ENCODE measurements at regions of chr6 and their contacts with region 1.

Region 1: DNA sequence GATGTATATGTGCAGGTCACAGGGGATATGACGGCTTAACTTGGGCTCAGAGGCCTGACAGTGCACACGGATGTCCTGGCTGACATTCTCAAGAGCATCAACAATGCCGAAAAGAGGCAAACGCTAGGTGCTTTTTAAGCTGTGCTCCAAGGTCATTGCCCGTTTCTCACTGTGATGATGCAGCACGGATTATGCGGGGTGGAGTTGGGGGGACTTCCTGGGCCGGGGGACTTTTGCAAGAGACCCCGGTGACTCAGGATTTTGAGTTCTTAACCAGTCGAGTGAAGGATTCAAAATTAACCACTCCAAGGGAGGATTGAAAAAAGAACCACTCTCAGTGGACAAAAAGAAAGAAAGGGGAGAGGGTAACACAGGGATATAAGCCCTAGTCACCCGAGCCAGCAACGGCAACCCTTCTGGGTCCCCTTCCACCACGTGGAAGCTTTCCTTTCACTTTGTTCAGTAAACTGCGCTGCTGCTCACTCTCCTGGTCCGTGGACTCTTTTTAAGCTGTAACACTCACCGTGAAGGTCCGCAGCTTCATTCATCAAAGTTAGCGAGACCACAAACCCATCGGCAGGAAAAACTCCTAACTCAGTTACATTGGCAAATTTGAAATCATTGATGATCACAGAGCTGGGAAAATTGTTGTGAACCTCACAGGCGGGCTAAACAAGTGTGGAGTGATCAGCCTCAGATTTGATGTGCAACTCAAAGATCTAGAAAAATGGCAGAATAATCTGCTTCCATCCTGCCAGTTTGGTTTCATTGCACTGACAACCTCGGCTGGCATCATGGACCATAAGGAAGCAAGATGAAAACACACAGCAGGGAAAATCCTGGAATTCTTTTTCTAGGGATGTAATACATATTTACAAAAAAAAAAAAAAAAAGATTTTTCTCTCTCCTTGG is 199.3 kb downstream of the ARID1B start:
- DNase-seq: peak; percentile 48
- H3K4me3 Mint-ChIP-seq: peak overlapping the region; percentile 73
- H3K27ac Mint-ChIP-seq: peak overlapping the region; percentile 77
- H3K4me1 Mint-ChIP-seq: peaks cover 74% of the 10 kb centered on the region
- H3K27me3 Mint-ChIP-seq: no peaks in the 10 kb centered on the region

Region 2: GRCh38 chr6:156963712-156964700 is 12.5 kb before region 1 on chr6:
- CTCF ChIA-PET with region 1: interaction called, 3 read pairs
- POLR2A ChIA-PET with region 1: no interaction called
- intact Hi-C with region 1: loop called (anchors 1 kb)
- DNase-seq: peak; percentile 79
- H3K4me3 Mint-ChIP-seq: no peak overlapping the region
- H3K27ac Mint-ChIP-seq: no peak overlapping the region
- H3K4me1 Mint-ChIP-seq: peaks cover 54% of the 10 kb centered on the region
- H3K27me3 Mint-ChIP-seq: no peaks in the 10 kb centered on the region

Region 3: GRCh38 chr6:157068691-157069324 is 92.3 kb after region 1 on chr6:
- CTCF ChIA-PET with region 1: no interaction called
- POLR2A ChIA-PET with region 1: no interaction called
- intact Hi-C with region 1: loop called (anchors 5 kb)
- DNase-seq: no peak
- H3K4me3 Mint-ChIP-seq: peak overlapping the region; percentile 18
- H3K27ac Mint-ChIP-seq: peak overlapping the region; percentile 49
- H3K4me1 Mint-ChIP-seq: peaks cover 47% of the 10 kb centered on the region
- H3K27me3 Mint-ChIP-seq: no peaks in the 10 kb centered on the region

Measured in activated CD4-positive, alpha-beta memory T cell treated with anti-CD3 and anti-CD28 coated beads for 36 hours (primary cell).